CD4-positive, alpha-beta T cell (primary cell): ENCODE measurements at regions of chr3 and their contacts with region 1.

Region 1: DNA sequence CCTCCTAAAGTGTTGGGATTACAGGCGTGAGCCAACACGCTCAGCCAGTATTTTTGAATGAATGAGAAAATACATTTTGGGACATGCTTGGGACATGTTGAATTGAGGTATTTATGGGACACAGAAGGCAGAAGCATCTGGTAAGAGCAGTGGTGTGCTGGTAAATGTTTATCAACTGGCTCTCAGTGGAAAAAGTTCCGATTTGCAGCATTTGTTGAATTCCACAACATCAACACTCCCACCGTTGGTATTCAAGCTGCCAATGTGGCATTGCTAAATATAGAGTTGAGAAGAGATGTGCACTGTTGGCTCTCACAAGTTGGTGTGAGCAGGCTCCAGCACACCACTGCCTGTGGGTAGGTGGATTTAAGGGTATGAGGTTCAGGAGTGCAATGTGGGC is 35.8 kb upstream of the LRRFIP2 start:
- DNase-seq: no peak
- ATAC-seq: no peak
- H3K4me3 ChIP-seq: no peak overlapping the region
- H3K4me3 Mint-ChIP-seq: no peak overlapping the region
- H3K27ac ChIP-seq: no peak overlapping the region
- H3K27ac Mint-ChIP-seq: no peak overlapping the region
- H3K4me1 ChIP-seq: peaks cover 14% of the 10 kb centered on the region
- H3K4me1 Mint-ChIP-seq: no peaks in the 10 kb centered on the region
- H3K27me3 ChIP-seq: no peaks in the 10 kb centered on the region
- H3K27me3 Mint-ChIP-seq: no peaks in the 10 kb centered on the region
- CTCF ChIP-seq: no peak

Region 2: GRCh38 chr3:36729204-36730056 is 480.8 kb before region 1 on chr3:
- CTCF ChIA-PET with region 1: no interaction called
- POLR2A ChIA-PET with region 1: no interaction called
- intact Hi-C with region 1: loop called in 1 of 2 experiments (anchors 2 kb)
- DNase-seq: peak in 3 of 14 experiments; percentile 45 to 54 (median 54)
- ATAC-seq: no peak
- H3K4me3 ChIP-seq: no peak overlapping the region
- H3K4me3 Mint-ChIP-seq: no peak overlapping the region
- H3K27ac ChIP-seq: no peak overlapping the region
- H3K27ac Mint-ChIP-seq: no peak overlapping the region
- H3K4me1 ChIP-seq: no peaks in the 10 kb centered on the region
- H3K4me1 Mint-ChIP-seq: no peaks in the 10 kb centered on the region
- H3K27me3 ChIP-seq: peaks cover 0 to 3% of the 10 kb centered on the region in 2 experiments
- H3K27me3 Mint-ChIP-seq: peaks cover 6% of the 10 kb centered on the region
- CTCF ChIP-seq: peak; percentile 65

Region 3: DNA sequence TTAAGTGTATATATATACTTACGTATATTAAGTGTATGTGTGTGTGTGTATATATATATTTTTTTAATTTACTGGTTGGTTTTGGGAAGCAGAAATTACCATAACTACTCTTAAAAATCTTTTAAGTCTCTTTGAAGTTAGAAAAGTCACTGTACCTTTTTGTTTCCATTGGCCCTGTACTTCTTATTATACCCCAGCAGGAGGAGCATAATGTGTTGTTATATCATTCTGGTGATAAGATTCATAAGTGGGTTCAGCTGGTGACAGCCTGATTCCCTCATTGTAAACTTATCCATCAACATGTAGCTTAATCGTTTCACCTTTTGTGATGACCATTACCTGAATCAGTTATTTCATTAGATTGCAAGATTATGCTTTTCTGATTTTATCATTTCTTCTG is 186.1 kb before region 1 on chr3:
- CTCF ChIA-PET with region 1: interaction called, 3 read pairs
- POLR2A ChIA-PET with region 1: no interaction called
- intact Hi-C with region 1: loop called (anchors 1 to 5 kb)
- DNase-seq: peak in 3 of 14 experiments; percentile 13 to 16 (median 14)
- ATAC-seq: peak; percentile 46
- H3K4me3 ChIP-seq: no peak overlapping the region
- H3K4me3 Mint-ChIP-seq: no peak overlapping the region
- H3K27ac ChIP-seq: no peak overlapping the region
- H3K27ac Mint-ChIP-seq: no peak overlapping the region
- H3K4me1 ChIP-seq: no peaks in the 10 kb centered on the region
- H3K4me1 Mint-ChIP-seq: no peaks in the 10 kb centered on the region
- H3K27me3 ChIP-seq: no peaks in the 10 kb centered on the region
- H3K27me3 Mint-ChIP-seq: no peaks in the 10 kb centered on the region
- CTCF ChIP-seq: no peak

Region 4: GRCh38 chr3:38368238-38368637 is 1158.0 kb after region 1 on chr3:
- CTCF ChIA-PET with region 1: no interaction called
- POLR2A ChIA-PET with region 1: no interaction called
- intact Hi-C with region 1: no loop called
- DNase-seq: no peak
- ATAC-seq: no peak
- H3K4me3 ChIP-seq: no peak overlapping the region
- H3K4me3 Mint-ChIP-seq: no peak overlapping the region
- H3K27ac ChIP-seq: no peak overlapping the region
- H3K27ac Mint-ChIP-seq: no peak overlapping the region
- H3K4me1 ChIP-seq: peaks cover 16% of the 10 kb centered on the region
- H3K4me1 Mint-ChIP-seq: peaks cover 14% of the 10 kb centered on the region
- H3K27me3 ChIP-seq: no peaks in the 10 kb centered on the region
- H3K27me3 Mint-ChIP-seq: no peaks in the 10 kb centered on the region
- CTCF ChIP-seq: no peak